HEK293 (cell line): ENCODE measurements at regions of chr12 and their contacts with region 1.

Region 1: GRCh38 chr12:111529424-111530368 is 69.4 kb downstream of the ATXN2 start:
- H3K4me3 ChIP-seq: no peak overlapping the region
- H3K27ac ChIP-seq: no peak overlapping the region
- H3K4me1 ChIP-seq: no peaks in the 10 kb centered on the region
- CTCF ChIP-seq: no peak

Region 2: DNA sequence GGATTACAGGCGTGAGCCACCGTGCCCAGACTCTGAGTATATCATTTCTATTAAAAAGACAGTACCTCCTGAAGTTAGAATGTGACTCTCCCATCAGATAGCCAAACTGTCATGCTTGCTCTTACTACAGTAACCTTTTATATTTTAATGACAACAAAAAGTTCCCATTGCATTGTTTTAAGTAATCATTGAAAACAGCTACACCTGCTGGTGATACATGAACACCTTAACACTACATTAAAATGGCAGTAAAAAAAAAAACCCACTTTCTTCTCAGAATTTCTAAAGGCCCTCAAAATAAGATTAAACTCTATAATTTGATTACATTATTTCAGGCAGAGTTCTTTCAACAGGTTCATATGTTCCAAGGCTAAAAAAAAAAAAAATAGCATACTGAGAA is 47.2 kb before region 1 on chr12:
- CTCF ChIA-PET with region 1: no interaction called
- POLR2A ChIA-PET with region 1: no interaction called
- H3K4me3 ChIP-seq: no peak overlapping the region
- H3K27ac ChIP-seq: no peak overlapping the region
- H3K4me1 ChIP-seq: no peaks in the 10 kb centered on the region
- CTCF ChIP-seq: no peak

Region 3: GRCh38 chr12:111544032-111544431 is 14.3 kb after region 1 on chr12:
- CTCF ChIA-PET with region 1: interaction called, 12 read pairs
- POLR2A ChIA-PET with region 1: no interaction called
- H3K4me3 ChIP-seq: no peak overlapping the region
- H3K27ac ChIP-seq: no peak overlapping the region
- H3K4me1 ChIP-seq: no peaks in the 10 kb centered on the region
- CTCF ChIP-seq: no peak